AG04449 (cell line): ENCODE measurements at regions of chr11 and their contacts with region 1.

Region 1: DNA sequence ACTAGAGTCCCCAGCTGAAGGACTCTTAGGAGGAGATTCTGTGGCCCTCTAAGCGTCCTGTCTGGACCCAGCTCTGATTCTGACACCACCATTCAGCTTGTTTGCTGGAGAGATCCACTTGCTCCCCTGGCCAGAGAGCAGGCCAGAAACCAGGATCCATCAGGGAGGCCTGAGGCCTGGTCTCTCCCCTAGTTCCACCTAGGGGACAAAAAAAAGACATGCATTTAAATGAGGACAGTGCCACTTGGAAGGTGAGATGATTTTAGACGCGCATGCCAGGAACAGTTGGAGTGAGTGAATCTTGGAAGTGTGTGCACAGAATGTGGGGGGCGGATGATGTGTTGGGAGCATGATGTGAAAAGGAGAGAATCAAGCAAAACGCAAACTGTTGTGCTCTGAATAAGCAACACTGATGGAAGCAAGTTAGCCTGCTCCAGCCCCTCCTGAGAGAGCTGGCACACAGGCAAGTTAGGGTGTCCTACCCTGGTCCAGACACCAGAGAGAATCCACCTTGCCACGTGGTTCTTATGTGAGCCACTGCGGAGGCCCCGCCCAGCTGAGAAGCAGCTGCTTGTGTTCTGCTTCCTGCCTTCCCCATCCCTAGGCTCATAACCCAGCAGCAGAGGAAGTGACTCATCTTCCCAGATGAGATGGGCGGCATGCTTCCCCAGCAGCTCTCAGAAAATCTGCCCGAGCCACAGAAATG is 8.0 kb upstream of the SLCO2B1 start:
- DNase-seq: peak; percentile 63
- H3K4me3 ChIP-seq: no peak overlapping the region
- CTCF ChIP-seq: no peak

Region 2: DNA sequence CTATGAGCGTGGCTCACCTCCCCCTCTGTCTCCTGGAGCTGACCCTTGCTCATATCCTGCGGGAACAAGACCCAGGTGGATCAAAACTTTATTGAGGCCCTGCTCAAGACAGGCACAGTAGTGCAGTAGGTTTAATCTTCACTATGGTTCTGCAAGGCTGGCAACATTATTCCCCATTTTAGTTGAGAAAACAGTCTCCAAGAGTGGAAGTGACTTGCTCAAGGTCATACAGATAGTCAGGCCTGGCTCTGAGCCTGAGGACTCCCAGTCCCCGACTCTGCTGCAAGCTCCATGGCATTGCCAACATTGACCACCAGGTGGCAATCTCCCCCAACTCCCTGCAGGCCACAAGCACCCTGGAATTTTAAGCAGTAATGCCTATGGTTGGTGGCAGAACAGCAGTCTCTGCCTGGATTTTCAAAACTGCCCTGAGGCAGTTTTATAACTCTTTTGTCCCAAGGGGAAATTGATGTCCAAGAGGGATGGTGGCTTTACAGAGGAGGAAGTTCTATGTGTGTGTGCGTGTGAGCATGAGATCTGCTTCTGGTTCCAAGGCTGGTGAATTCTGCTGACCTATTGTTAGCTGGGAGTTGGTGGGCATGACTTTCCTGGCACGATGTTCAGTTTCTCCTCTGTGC is 120.0 kb before region 1 on chr11:
- CTCF ChIA-PET with region 1: interaction called, 85 read pairs
- POLR2A ChIA-PET with region 1: no interaction called
- DNase-seq: peak; percentile 28
- H3K4me3 ChIP-seq: no peak overlapping the region
- CTCF ChIP-seq: peak; percentile 96

Region 3: GRCh38 chr11:75160192-75160757 is 17.4 kb after region 1 on chr11:
- CTCF ChIA-PET with region 1: interaction called, 171 read pairs
- POLR2A ChIA-PET with region 1: no interaction called
- DNase-seq: no peak
- H3K4me3 ChIP-seq: no peak overlapping the region
- CTCF ChIP-seq: no peak

Region 4: GRCh38 chr11:75204685-75205563 is 62.1 kb after region 1 on chr11:
- CTCF ChIA-PET with region 1: interaction called, 438 read pairs
- POLR2A ChIA-PET with region 1: no interaction called
- DNase-seq: no peak
- H3K4me3 ChIP-seq: no peak overlapping the region
- CTCF ChIP-seq: peak; percentile 96

Region 5: DNA sequence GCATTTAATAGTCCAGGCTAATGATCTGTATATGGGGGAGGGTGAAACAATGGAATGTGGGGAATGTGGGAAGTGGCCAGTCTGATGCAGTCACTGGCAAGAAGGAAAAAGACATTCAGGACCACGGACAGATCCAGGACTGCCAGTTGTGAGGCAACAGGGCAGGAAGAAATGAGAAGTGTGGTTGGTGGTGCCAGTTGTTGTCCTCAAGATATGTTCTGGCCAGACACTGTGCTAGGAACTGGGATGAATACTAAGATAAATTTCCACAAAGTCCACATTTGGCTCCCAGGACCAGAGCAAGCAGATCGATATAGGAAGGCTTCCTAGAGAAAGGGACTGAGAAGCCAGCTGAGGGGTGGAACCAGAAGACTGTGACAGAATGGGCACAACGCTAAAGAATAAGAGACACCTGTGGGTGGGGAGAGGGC is 90.9 kb after region 1 on chr11:
- CTCF ChIA-PET with region 1: interaction called, 501 read pairs
- POLR2A ChIA-PET with region 1: no interaction called
- DNase-seq: no peak
- H3K4me3 ChIP-seq: no peak overlapping the region
- CTCF ChIP-seq: no peak